HAP-1 (cell line): ENCODE measurements at regions of chr1 and their contacts with region 1.

Region 1: DNA sequence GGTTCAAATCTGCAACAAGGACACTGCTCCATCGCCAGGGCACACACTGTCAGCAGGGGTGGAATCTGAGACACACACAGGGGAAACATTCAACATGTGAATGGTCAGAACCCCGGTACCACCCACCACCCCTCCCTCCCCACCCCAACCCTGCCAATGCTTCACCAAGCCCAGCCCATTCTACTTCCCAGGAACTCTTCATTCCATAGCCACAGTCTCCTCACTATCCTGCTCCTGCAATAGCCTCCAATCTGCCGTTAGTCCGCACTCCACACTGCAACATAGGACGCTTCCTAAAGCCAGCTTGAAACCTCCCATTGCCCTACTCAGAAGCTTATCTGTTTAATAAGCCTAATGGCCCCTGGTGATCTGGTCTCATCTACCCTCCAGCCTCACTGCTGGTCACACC is 7.5 kb upstream of the RAB3B start:
- DNase-seq: no peak
- H3K4me3 ChIP-seq: no peak overlapping the region
- H3K4me1 ChIP-seq: no peaks in the 10 kb centered on the region
- H3K27me3 ChIP-seq: no peaks in the 10 kb centered on the region

Region 2: GRCh38 chr1:51901151-51901550 is 96.8 kb before region 1 on chr1:
- in situ Hi-C with region 1: loop called (anchors 5 kb)
- DNase-seq: no peak
- H3K4me3 ChIP-seq: no peak overlapping the region
- H3K4me1 ChIP-seq: no peaks in the 10 kb centered on the region; the same call in 1 of the 2 replicates
- H3K27me3 ChIP-seq: peaks cover 3% of the 10 kb centered on the region; the same call in 1 of the 2 replicates

Region 3: GRCh38 chr1:52041551-52042185 is 43.7 kb after region 1 on chr1:
- in situ Hi-C with region 1: no loop called
- DNase-seq: no peak
- H3K4me3 ChIP-seq: no peak overlapping the region
- H3K4me1 ChIP-seq: peaks cover 3% of the 10 kb centered on the region; the same call in 1 of the 2 replicates
- H3K27me3 ChIP-seq: no peaks in the 10 kb centered on the region